Mammary epithelial cell (primary cell): ENCODE measurements at regions of chr7 and their contacts with region 1.

Region 1: GRCh38 chr7:106176414-106177299 is 64.5 kb upstream of the SYPL1 start:
- DNase-seq: peak; percentile 52
- H3K4me3 ChIP-seq: no peak overlapping the region
- H3K27ac ChIP-seq: no peak overlapping the region
- H3K4me1 ChIP-seq: peaks cover 3% of the 10 kb centered on the region
- H3K27me3 ChIP-seq: no peaks in the 10 kb centered on the region
- CTCF ChIP-seq: peak; percentile 96 to 98

Region 2: DNA sequence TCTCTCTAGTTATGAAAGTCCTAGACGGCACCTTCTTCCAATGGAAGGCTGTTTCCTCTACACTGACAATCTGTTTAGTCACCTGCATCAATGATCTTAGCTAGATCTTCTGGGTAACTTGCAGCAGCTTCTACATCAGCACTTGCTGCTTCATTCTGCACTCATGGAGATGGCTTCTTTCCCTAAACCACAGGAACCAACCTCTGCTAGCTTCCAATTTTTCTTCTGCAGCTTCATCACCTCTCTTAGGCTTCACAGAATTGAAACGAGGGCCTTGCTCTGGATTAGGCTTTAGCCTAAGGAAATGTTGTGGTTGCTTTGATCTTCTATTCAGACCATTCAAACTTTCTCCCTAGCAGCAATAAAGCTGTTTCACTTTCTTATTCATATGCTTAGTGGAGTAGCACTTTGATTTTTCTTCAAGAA is 83.5 kb after region 1 on chr7:
- CTCF ChIA-PET with region 1: no interaction called
- dilution Hi-C with region 1: no loop called
- in situ Hi-C with region 1: no loop called
- intact Hi-C with region 1: loop called (anchors 10 kb)
- DNase-seq: no peak
- H3K4me3 ChIP-seq: no peak overlapping the region
- H3K27ac ChIP-seq: no peak overlapping the region
- H3K4me1 ChIP-seq: no peaks in the 10 kb centered on the region
- H3K27me3 ChIP-seq: no peaks in the 10 kb centered on the region
- CTCF ChIP-seq: no peak

Region 3: GRCh38 chr7:106367018-106367420 is 190.4 kb after region 1 on chr7:
- CTCF ChIA-PET with region 1: no interaction called
- dilution Hi-C with region 1: no loop called
- in situ Hi-C with region 1: no loop called
- intact Hi-C with region 1: loop called (anchors 2 kb)
- DNase-seq: no peak
- H3K4me3 ChIP-seq: no peak overlapping the region
- H3K27ac ChIP-seq: no peak overlapping the region
- H3K4me1 ChIP-seq: peaks cover 3% of the 10 kb centered on the region
- H3K27me3 ChIP-seq: no peaks in the 10 kb centered on the region
- CTCF ChIP-seq: peak; percentile 17 to 51

Region 4: GRCh38 chr7:106520962-106521940 is 344.6 kb after region 1 on chr7:
- CTCF ChIA-PET with region 1: no interaction called
- dilution Hi-C with region 1: no loop called
- in situ Hi-C with region 1: no loop called
- intact Hi-C with region 1: loop called (anchors 5 kb)
- DNase-seq: peak; percentile 19
- H3K4me3 ChIP-seq: no peak overlapping the region
- H3K27ac ChIP-seq: no peak overlapping the region
- H3K4me1 ChIP-seq: no peaks in the 10 kb centered on the region
- H3K27me3 ChIP-seq: no peaks in the 10 kb centered on the region
- CTCF ChIP-seq: peak; percentile 21 to 31

Region 5: GRCh38 chr7:106659963-106660861 is 483.6 kb after region 1 on chr7:
- CTCF ChIA-PET with region 1: interaction called, 13 read pairs
- dilution Hi-C with region 1: no loop called
- in situ Hi-C with region 1: loop called in 1 of 2 experiments (anchors 10 kb)
- intact Hi-C with region 1: loop called (anchors 1 kb)
- DNase-seq: peak; percentile 74
- H3K4me3 ChIP-seq: peak overlapping the region; percentile 74 to 99 (median 90)
- H3K27ac ChIP-seq: peak overlapping the region; percentile 81
- H3K4me1 ChIP-seq: peaks cover 6% of the 10 kb centered on the region
- H3K27me3 ChIP-seq: no peaks in the 10 kb centered on the region
- CTCF ChIP-seq: peak; percentile 75 to 93

Region 6: GRCh38 chr7:106793015-106793975 is 616.6 kb after region 1 on chr7:
- CTCF ChIA-PET with region 1: no interaction called
- dilution Hi-C with region 1: no loop called
- in situ Hi-C with region 1: no loop called
- intact Hi-C with region 1: loop called (anchors 2 kb)
- DNase-seq: peak; percentile 12
- H3K4me3 ChIP-seq: no peak overlapping the region
- H3K27ac ChIP-seq: no peak overlapping the region
- H3K4me1 ChIP-seq: no peaks in the 10 kb centered on the region
- H3K27me3 ChIP-seq: peaks cover 5% of the 10 kb centered on the region
- CTCF ChIP-seq: peak; percentile 51 to 71